Activated CD4-positive, alpha-beta T cell treated with anti-CD3 and anti-CD28 coated beads for 36 hours (primary cell): ENCODE measurements at regions of chr3 and their contacts with region 1.

Region 1: GRCh38 chr3:33440323-33441232 is at the start of gene UBP1:
- DNase-seq: peak; percentile 99
- ATAC-seq: peak; percentile 88
- H3K4me3 Mint-ChIP-seq: peak within 1 kb of the TSS; percentile 95
- H3K27ac Mint-ChIP-seq: peak within 1 kb of the TSS; percentile 100
- H3K4me1 Mint-ChIP-seq: peaks cover 35% of the 10 kb centered on the region
- H3K27me3 Mint-ChIP-seq: no peaks in the 10 kb centered on the region
- total RNA-seq, gene UBP1: 54.8 to 66.0 TPM

Region 2: DNA sequence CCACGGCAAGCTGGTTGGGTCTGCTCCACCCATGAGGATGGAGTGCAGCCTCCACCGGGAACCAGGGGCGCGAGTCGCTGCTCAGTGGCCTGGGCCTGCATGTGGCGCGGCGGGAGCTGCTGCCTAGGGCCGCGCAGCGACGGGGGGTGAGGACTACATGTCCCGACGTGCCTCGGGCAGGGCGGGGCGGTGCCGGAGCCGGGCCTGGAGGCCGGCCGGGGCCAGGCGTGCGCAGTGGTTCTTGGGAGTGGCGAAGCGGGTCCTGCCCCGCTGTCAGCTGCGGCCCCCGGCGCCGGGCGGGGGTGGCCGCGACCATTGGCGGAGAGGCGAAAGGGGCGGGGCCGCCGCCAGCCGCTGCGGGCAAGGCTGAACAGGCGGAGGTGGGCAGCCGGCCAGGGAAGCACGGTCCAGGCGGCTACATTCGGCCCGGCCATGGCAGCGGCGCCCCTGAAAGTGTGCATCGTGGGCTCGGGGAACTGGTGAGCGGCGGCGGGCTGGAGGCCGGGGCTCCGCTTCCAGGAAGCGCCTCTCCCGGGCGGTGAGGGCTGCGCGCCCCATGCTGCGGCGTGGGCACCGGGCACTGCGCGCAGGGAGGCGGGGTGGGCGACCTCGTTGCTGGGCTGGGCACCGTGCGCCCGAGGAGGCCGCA is 1334.2 kb before region 1 on chr3 and contains the start of gene GPD1L:
- CTCF ChIA-PET with region 1: no interaction called
- POLR2A ChIA-PET with region 1: no interaction called
- intact Hi-C with region 1: loop called in 1 of 2 experiments (anchors 10 kb)
- DNase-seq: peak; percentile 96
- ATAC-seq: peak; percentile 99
- H3K4me3 Mint-ChIP-seq: peak within 1 kb of the TSS; percentile 92
- H3K27ac Mint-ChIP-seq: peak within 1 kb of the TSS; percentile 90
- H3K4me1 Mint-ChIP-seq: peaks cover 30% of the 10 kb centered on the region
- H3K27me3 Mint-ChIP-seq: no peaks in the 10 kb centered on the region
- total RNA-seq, gene GPD1L: 6.6 to 10.1 TPM

Region 3: GRCh38 chr3:32684800-32685542 is 755.6 kb before region 1 on chr3 and contains the start of gene CNOT10:
- CTCF ChIA-PET with region 1: no interaction called
- POLR2A ChIA-PET with region 1: no interaction called
- intact Hi-C with region 1: loop called in 1 of 2 experiments (anchors 1 kb)
- DNase-seq: peak; percentile 98
- ATAC-seq: peak; percentile 96
- H3K4me3 Mint-ChIP-seq: peak within 1 kb of the TSS; percentile 88
- H3K27ac Mint-ChIP-seq: peak within 1 kb of the TSS; percentile 91
- H3K4me1 Mint-ChIP-seq: peaks cover 32% of the 10 kb centered on the region
- H3K27me3 Mint-ChIP-seq: no peaks in the 10 kb centered on the region
- total RNA-seq, gene CNOT10: 57.7 to 76.9 TPM

Region 4: GRCh38 chr3:32960404-32961170 is 480.0 kb before region 1 on chr3:
- CTCF ChIA-PET with region 1: no interaction called
- POLR2A ChIA-PET with region 1: no interaction called
- intact Hi-C with region 1: loop called in 1 of 2 experiments (anchors 5 kb)
- DNase-seq: no peak
- ATAC-seq: peak; percentile 61
- H3K4me3 Mint-ChIP-seq: peak overlapping the region; percentile 8
- H3K27ac Mint-ChIP-seq: peak overlapping the region; percentile 97
- H3K4me1 Mint-ChIP-seq: peaks cover 77% of the 10 kb centered on the region
- H3K27me3 Mint-ChIP-seq: no peaks in the 10 kb centered on the region

Region 5: GRCh38 chr3:33096093-33096868 is 344.3 kb before region 1 on chr3:
- CTCF ChIA-PET with region 1: no interaction called
- POLR2A ChIA-PET with region 1: no interaction called
- intact Hi-C with region 1: loop called in 1 of 2 experiments (anchors 2 kb)
- DNase-seq: peak; percentile 66
- ATAC-seq: peak; percentile 46
- H3K4me3 Mint-ChIP-seq: peak overlapping the region; percentile 99
- H3K27ac Mint-ChIP-seq: peak overlapping the region; percentile 92
- H3K4me1 Mint-ChIP-seq: peaks cover 40% of the 10 kb centered on the region
- H3K27me3 Mint-ChIP-seq: no peaks in the 10 kb centered on the region

Region 6: GRCh38 chr3:33131331-33132018 is 309.1 kb before region 1 on chr3:
- CTCF ChIA-PET with region 1: interaction called, 12 read pairs
- POLR2A ChIA-PET with region 1: interaction called, 5 read pairs
- intact Hi-C with region 1: no loop called
- DNase-seq: peak; percentile 54
- ATAC-seq: peak; percentile 63
- H3K4me3 Mint-ChIP-seq: no peak overlapping the region
- H3K27ac Mint-ChIP-seq: no peak overlapping the region
- H3K4me1 Mint-ChIP-seq: peaks cover 10% of the 10 kb centered on the region
- H3K27me3 Mint-ChIP-seq: no peaks in the 10 kb centered on the region

Region 7: GRCh38 chr3:33717866-33718594 is 277.5 kb after region 1 on chr3 and contains the start of gene CLASP2:
- CTCF ChIA-PET with region 1: no interaction called
- POLR2A ChIA-PET with region 1: interaction called, 8 read pairs
- intact Hi-C with region 1: loop called (anchors 1 to 5 kb)
- DNase-seq: peak; percentile 90
- ATAC-seq: peak; percentile 85
- H3K4me3 Mint-ChIP-seq: no peak within 1 kb of the TSS
- H3K27ac Mint-ChIP-seq: peak within 1 kb of the TSS; percentile 94
- H3K4me1 Mint-ChIP-seq: peaks cover 6% of the 10 kb centered on the region
- H3K27me3 Mint-ChIP-seq: no peaks in the 10 kb centered on the region
- total RNA-seq, gene CLASP2: 45.5 to 68.5 TPM